ENCODE measurements at regions of chr10 and their contacts with region 1.

Region 1: DNA sequence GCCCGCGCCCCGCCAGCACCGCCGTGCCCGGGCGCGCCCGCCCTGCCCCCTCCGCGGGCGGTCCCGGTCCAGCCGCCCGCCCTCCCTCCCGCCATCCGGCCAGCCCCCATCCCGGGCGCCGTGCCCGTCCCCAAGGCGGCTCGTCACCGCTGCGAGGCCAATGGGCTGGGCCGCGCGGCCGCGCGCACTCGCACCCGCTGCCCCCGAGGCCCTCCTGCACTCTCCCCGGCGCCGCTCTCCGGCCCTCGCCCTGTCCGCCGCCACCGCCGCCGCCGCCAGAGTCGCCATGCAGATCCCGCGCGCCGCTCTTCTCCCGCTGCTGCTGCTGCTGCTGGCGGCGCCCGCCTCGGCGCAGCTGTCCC is at the start of gene HTRA1:
- DNase-seq: peak; percentile 67
- H3K4me3 ChIP-seq: peak within 1 kb of the TSS; percentile 71 to 92 (median 88)
- H3K27ac ChIP-seq: peak within 1 kb of the TSS; percentile 46
- H3K4me1 ChIP-seq: peaks cover 14% of the 10 kb centered on the region
- H3K27me3 ChIP-seq: no peaks in the 10 kb centered on the region
- CTCF ChIP-seq: no peak
- POLR2A ChIP-seq: peak; percentile 58
- total RNA-seq, gene HTRA1: 192 and 255 TPM in 2 replicates

Region 2: DNA sequence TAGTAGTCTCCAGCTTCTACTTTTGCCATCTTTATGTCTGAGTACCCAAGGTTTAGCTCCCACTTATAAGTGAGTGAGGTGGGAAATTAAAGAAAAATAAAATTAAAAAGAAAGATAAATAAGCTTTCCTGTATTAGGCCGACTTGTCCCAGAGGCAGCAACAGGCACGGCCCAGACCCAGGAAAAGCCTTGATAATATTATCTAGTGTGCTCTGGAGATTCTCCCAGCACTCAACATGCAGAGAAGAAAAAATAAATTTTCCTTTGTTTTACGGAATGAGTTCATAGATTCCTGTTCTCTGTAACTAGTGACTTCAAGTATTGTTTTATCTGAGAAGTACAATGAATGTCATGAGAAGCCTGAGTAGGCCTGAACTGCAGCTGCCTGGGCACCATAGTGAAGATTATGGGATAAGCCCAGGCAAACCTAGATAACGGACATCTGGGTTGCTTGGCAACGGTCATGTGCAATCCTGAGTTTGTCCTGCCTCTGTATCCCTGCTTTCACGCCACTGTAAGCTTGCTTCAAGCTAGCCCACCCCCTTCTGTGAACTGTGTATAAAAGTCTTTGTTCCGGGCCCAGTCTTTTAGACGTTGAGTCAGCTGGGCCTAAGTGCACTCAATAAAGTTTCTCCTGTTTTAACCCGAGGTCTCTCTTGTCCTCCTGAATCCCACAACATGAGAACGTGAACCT is 540.0 kb before region 1 on chr10:
- CTCF ChIA-PET with region 1: no interaction called
- POLR2A ChIA-PET with region 1: no interaction called
- dilution Hi-C with region 1: no loop called
- intact Hi-C with region 1: no loop called
- DNase-seq: no peak
- H3K4me3 ChIP-seq: no peak overlapping the region
- H3K27ac ChIP-seq: no peak overlapping the region
- H3K4me1 ChIP-seq: peaks cover 3% of the 10 kb centered on the region
- H3K27me3 ChIP-seq: no peaks in the 10 kb centered on the region
- CTCF ChIP-seq: no peak
- POLR2A ChIP-seq: no peak

Region 3: GRCh38 chr10:122374237-122374869 is 87.0 kb before region 1 on chr10 and contains the start of gene PLEKHA1:
- CTCF ChIA-PET with region 1: no interaction called
- POLR2A ChIA-PET with region 1: no interaction called
- dilution Hi-C with region 1: no loop called
- intact Hi-C with region 1: loop called (anchors 2 kb)
- DNase-seq: peak; percentile 96
- H3K4me3 ChIP-seq: peak within 1 kb of the TSS; percentile 85 to 93 (median 89)
- H3K27ac ChIP-seq: peak within 1 kb of the TSS; percentile 84
- H3K4me1 ChIP-seq: peaks cover 15% of the 10 kb centered on the region
- H3K27me3 ChIP-seq: no peaks in the 10 kb centered on the region
- CTCF ChIP-seq: no peak
- POLR2A ChIP-seq: peak; percentile 56
- total RNA-seq, gene PLEKHA1: 58.0 and 58.8 TPM in 2 replicates

Region 4: DNA sequence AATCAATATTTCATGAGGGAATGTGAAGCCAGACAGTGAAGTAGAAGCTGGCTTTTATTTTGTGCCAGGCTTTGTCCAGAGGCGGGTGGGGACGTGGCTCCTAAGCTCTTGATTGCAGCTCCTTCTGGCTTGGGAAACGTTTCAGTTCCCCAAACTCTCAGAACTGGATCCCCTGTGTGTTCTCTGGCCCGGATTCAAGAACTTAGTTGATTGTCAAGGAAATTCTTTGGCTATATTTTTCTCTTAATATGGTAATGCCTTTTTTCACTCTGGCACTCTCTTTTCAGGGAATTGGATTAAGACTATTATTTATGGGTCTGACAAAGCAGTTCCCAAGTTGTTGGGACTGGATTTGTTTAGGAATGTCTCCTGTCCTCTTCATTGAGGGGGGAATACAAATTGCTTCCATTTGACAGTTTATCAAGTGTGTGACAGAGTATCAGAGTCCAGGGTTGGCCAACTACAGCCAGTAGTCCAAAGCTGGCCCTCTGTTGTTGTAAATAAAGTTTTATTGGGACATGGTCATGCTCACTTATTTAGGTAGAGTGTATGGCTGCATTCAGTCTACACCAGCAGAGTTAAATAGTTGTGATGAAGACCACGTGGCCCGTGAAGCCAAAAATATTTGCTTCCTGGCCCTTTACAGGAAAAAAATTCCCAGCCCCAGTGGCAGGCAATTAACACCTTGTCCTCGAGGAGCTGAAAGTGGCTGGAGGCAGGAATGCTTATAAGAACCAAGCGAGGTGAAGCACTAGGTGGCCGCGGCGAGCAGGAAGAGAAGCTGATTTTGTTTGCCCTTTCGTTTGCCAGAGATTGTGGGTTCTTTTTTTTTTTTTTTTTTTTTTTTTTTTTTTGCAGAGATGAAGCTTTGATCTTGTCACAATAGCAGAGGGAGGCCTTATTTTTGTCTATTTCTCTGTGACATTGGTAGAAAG is 34.3 kb after region 1 on chr10:
- CTCF ChIA-PET with region 1: interaction called, 6 read pairs
- POLR2A ChIA-PET with region 1: no interaction called
- dilution Hi-C with region 1: no loop called
- intact Hi-C with region 1: loop called (anchors 1 kb)
- DNase-seq: peak; percentile 72
- H3K4me3 ChIP-seq: peak overlapping the region in 1 of 3 experiments; percentile 32
- H3K27ac ChIP-seq: peak overlapping the region; percentile 91
- H3K4me1 ChIP-seq: peaks cover 32% of the 10 kb centered on the region
- H3K27me3 ChIP-seq: no peaks in the 10 kb centered on the region
- CTCF ChIP-seq: no peak
- POLR2A ChIP-seq: no peak

Region 5: DNA sequence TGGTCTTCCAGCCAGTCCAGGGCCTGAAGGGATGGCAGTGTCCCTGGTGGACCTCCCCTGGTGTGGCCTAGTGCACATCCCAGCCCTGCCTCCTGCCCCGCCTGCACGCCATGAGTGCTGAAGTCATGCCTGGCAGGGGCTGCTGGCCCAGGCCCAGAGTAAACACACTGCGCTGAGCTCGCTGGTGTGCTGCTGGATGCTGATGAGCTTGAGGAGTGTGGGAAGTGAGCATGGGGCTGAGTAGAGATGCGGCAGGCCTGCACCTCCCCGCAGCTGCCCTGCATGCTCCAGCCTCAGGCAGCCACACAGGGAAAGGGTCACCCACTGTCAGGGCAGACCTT is 43.2 kb after region 1 on chr10:
- CTCF ChIA-PET with region 1: interaction called, 6 read pairs
- POLR2A ChIA-PET with region 1: no interaction called
- dilution Hi-C with region 1: no loop called
- intact Hi-C with region 1: loop called (anchors 1 kb)
- DNase-seq: peak; percentile 94
- H3K4me3 ChIP-seq: no peak overlapping the region
- H3K27ac ChIP-seq: peak overlapping the region; percentile 11
- H3K4me1 ChIP-seq: peaks cover 9% of the 10 kb centered on the region
- H3K27me3 ChIP-seq: no peaks in the 10 kb centered on the region
- CTCF ChIP-seq: no peak
- POLR2A ChIP-seq: no peak